ENCODE measurements at regions of chr6 and their contacts with region 1.

Region 1: DNA sequence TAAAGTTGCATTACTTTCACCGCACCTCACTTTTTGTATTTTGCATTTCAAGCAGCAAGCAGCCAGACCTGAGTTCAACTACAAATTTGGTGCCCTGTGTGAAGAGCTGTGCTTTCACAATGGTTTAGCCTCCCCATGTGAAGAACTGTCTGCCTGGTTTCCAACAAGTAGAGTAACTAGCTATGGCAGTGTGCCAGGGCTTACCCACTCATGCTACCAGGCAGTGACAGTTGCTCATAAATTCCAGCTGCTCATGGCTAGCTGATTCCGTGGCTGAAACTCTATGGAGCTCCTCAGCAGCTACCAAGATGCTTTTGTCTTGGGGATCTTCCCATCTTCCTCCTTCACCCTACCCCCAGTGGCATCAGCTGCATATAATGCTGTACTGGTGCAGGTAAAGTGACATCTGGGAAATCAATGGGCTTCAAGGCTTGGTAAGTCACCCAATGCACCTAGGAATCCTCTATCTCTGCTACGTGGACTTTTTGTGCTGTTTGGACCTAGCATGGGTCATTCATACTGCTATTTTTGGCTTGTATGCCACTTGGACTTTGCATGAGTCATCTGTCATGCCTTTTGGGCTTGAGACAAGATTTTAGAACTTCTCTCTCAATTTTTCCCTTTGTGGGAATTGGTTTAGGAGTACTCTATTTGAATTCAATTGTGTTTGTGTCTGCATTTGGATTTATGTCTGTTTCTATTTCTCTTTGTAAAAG is 176.5 kb upstream of the GJE1 start:
- DNase-seq: no peak
- H3K4me3 ChIP-seq: no peak overlapping the region
- H3K27ac ChIP-seq: no peak overlapping the region
- H3K4me1 ChIP-seq: no peaks in the 10 kb centered on the region
- H3K27me3 ChIP-seq: no peaks in the 10 kb centered on the region
- CTCF ChIP-seq: no peak
- POLR2A ChIP-seq: no peak

Region 2: DNA sequence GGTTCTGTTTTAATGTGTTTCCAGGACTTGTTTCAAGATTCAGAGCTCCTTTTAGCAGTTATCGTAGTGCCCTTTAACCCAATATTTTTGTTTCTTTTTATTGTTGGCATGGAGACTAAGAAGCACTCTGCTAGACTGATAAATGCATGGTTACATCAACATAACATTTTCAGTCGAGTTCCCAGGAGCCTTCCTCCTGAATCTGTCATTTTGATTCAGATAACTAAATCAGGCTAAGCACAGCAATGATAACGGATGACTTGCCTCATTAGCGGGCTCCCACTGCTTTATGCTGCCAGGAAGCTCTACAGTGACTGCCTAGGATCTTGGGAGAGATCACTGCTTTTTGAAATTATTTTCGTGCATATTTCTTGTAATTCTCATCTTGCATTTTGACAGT is 596.3 kb before region 1 on chr6:
- intact Hi-C with region 1: loop called (anchors 5 kb)
- DNase-seq: no peak
- H3K4me3 ChIP-seq: no peak overlapping the region
- H3K27ac ChIP-seq: no peak overlapping the region
- H3K4me1 ChIP-seq: no peaks in the 10 kb centered on the region
- H3K27me3 ChIP-seq: no peaks in the 10 kb centered on the region
- CTCF ChIP-seq: no peak
- POLR2A ChIP-seq: no peak

Region 3: DNA sequence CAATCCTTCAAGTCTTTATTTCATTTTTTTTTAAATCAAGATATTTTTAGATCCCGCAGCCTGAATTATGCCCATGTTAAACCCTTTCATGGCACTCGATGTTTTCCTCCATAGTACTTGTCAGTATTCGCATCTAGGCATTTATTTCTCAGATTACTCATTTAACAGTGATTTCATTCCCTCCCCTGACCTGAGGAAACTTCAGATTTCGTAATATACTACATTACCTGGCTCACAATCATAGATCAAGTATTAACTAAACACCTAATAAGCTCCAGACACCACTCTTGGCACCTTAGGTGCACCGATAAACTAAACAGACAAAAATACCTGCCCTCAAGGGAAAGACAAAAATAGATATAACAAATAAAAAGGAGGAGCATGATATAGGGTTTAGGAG is 236.7 kb before region 1 on chr6:
- intact Hi-C with region 1: no loop called
- DNase-seq: no peak
- H3K4me3 ChIP-seq: no peak overlapping the region
- H3K27ac ChIP-seq: no peak overlapping the region
- H3K4me1 ChIP-seq: no peaks in the 10 kb centered on the region
- H3K27me3 ChIP-seq: no peaks in the 10 kb centered on the region
- CTCF ChIP-seq: no peak
- POLR2A ChIP-seq: no peak

Measured in breast epithelium (tissue), 4 donors.